Right ventricle myocardium inferior (tissue), 1 donor: ENCODE measurements at regions of chr1 and their contacts with region 1.

Region 1: DNA sequence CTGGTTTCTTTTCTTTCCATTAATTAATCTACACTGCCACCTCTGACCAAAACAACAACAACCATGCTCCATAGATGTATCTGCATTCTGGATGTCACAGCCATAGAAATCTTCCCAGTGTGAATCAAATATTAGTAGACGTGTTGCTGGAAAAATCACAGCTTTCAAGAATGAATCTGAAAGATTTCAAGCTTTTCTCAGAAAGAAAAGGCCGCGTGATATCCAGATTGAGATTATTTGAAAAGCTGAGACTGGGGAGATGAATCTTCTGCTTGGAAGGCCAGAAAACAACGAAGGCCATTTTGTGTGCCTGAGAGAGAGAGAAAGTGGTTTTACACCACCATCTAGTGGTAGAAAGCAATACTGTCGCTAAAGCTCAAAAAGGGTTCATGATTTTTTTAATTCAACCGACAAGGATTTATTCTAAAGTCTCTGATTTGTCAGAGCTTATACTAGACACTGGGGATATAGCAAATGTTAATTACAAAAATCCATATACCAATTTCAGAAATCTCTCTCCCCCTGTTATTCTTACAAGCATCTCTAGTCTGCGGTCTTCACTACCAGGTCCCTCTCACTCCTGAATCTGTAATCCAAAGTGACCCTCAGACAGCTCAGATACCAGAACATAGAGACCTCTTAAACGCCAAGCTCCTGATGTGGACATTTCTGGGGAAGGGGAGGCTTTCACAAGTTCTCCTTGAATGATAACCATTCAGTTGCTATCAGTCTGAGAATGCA is 87.5 kb upstream of the SGIP1 start:
- DNase-seq: no peak
- ATAC-seq: peak; percentile 40

Region 2: GRCh38 chr1:65958561-65959350 is 487.7 kb before region 1 on chr1:
- intact Hi-C with region 1: loop called (anchors 2 kb)
- DNase-seq: no peak
- ATAC-seq: no peak

Region 3: DNA sequence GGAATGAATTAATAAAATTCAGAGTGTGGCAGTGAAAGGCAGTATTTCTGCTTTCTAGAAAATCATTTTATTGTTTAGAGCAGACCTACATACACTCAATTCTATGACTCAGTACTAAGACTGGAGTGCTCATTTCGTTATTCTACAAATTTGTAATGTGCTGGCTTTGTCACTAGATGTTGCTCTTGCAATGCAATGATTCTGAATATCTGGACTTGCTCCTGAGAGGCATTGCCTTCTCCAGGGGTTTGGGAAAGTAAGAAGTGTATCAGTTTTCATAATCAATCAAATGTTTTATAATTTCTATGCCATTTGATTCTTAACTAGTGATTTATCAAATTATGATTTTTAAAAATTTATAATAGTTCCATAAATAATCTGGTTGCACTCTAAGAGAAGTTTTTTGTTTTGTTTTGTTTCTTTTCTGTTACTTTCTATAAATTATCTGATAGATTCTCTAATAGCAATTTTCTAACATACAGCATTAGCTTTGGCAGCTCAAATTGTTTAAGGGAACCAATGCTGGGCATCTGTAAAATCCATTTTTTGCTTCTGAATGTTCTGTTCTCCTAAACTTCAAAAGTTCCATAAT is 193.0 kb before region 1 on chr1:
- intact Hi-C with region 1: loop called (anchors 1 kb)
- DNase-seq: no peak
- ATAC-seq: peak; percentile 85

Region 4: GRCh38 chr1:66271216-66271903 is 175.1 kb before region 1 on chr1:
- intact Hi-C with region 1: loop called (anchors 5 kb)
- DNase-seq: peak; percentile 88
- ATAC-seq: peak; percentile 89

Region 5: GRCh38 chr1:66331657-66332547 is 114.5 kb before region 1 on chr1:
- intact Hi-C with region 1: loop called (anchors 2 kb)
- DNase-seq: peak; percentile 80
- ATAC-seq: peak; percentile 70

Region 6: DNA sequence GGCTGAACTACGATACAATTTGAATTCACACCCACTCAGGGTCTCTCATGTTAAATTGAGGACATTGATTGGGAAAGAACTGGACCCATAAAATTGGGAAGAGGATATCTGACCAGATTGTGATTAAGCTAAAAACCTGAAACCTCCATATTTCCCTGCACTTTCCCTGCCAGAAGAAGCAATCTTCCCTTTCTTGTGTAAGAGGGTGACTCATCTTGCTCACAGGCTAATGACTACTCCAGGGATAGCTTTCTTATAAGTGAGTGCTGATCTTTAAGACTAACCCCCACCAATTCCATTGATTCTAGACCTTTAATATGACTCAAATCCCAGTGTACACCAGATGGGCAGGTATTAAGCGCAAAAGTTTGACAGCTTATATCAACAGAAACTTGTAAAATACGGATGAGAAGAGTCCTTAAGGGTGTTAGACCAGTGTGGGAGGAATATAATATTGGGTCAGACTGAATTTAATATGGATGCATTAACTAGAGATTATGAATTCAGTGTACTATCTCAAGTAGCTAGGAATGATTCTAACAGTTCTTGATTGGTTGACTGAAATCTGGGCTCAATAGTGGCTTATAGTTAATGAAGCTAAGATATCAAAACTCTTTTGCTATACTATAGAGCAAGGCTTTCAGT is 75.4 kb after region 1 on chr1:
- intact Hi-C with region 1: no loop called
- DNase-seq: no peak
- ATAC-seq: no peak

Region 7: DNA sequence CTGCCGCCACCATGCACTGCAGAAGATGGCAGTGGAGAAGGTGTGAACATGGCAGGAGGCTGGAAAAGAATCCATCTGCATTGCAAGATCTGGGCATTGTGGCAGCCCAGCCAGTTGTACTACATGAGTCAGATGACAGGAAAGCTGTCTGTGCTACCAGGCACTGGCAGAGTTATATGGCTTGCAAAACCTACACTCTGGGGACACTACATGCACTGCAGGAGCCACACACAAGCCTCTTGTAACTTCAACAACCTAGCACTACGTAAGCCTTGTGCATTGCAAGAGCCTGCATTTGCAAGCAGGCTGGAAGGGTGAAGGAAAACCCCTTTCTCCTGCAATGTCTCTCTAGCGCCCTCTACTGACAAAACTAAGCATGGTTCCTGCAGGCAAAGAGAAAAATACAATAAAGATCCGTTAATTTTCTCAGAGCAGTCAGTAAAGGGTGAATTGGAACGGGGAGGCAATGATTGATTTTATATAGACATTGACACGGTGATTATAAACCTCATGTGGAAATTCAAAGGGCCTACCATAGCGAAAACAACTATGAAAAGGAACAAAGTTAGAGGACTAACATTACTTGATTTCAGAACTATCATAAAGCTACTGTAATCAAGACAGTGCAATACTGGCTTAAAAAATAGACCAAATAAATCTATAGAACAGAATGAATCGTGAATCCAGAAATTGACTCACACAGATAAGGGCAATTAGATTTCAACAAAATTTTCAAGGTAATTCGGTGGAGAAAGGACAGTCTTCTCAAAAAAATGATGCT is 279.6 kb after region 1 on chr1:
- intact Hi-C with region 1: loop called (anchors 5 kb)
- DNase-seq: no peak
- ATAC-seq: peak; percentile 64